ENCODE measurements at regions of chr14 and their contacts with region 1.

Region 1: DNA sequence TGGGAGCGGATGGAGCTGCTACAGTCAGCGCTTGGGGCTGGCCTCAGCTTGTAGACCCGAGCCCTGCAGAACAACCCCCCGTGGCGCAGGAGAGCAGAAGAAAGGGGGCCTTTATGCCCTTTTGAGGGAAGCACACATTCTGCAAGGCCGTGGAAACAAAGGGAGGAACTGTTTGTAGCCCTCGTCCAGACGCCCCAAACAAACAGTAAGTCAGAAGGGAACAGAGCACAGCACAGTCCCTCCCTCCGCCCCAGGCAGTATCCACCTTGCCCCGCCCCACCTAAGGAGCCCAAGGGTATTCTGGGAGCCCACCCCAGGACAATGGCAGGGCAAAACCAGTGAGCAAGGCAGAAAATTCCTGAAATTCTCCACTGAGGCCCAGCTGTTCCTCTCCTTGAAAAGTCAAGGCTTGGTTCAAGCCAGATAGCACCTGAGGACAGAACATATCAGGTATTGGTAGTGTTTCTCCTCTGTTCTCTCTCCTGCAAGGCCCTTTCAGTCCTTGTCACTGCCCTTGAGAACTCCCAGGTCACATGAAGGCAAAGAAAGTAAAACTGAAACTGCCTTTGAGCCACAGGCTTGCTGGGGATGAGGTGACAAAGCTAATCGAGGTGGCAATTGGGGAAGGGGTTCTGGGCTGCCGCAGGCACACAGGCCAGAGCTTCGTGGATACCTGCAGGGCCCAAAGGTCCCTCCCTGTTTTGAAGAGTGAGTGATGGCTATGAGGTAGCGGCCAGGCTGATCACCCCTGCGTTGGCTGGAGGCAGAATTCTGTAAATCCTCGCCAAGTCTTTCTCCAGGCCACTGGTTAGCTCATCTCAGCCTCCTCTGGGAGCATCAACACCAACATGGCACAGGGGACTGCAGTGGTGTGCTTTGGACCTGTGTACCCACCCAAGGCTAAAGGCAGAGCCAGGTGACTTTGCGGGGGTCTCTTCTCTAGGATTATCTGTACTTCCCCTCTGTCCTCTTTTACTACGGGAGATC is 499 bp downstream of the DGLUCY start:
- DNase-seq: peak; percentile 83
- H3K4me3 Mint-ChIP-seq: peak overlapping the region; percentile 94
- H3K27ac Mint-ChIP-seq: peak overlapping the region; percentile 96
- H3K4me1 Mint-ChIP-seq: peaks cover 65% of the 10 kb centered on the region
- H3K27me3 Mint-ChIP-seq: no peaks in the 10 kb centered on the region

Region 2: DNA sequence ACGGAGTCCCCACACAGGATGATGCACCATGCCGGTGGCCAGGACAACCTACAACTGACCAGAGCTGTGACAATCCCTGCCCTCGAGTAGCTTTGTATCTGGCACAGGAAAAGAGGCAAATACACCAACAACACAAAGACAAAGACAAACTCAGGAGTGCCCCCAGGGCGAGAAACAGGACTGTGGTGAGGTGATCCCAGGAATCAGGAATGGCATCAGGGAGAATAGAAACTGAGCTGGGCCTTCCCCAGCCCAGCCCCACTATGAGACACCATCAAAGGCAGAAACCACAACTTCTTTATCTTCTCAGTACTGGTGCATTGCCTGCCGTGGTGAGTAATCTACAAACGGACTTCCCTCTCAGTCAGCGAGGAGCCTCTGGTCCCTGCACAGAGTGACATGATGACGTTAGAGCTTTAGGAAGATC is 455.8 kb before region 1 on chr14:
- CTCF ChIA-PET with region 1: no interaction called
- POLR2A ChIA-PET with region 1: no interaction called
- DNase-seq: no peak
- H3K4me3 Mint-ChIP-seq: no peak overlapping the region
- H3K27ac Mint-ChIP-seq: no peak overlapping the region
- H3K4me1 Mint-ChIP-seq: peaks cover 9% of the 10 kb centered on the region
- H3K27me3 Mint-ChIP-seq: no peaks in the 10 kb centered on the region

Region 3: DNA sequence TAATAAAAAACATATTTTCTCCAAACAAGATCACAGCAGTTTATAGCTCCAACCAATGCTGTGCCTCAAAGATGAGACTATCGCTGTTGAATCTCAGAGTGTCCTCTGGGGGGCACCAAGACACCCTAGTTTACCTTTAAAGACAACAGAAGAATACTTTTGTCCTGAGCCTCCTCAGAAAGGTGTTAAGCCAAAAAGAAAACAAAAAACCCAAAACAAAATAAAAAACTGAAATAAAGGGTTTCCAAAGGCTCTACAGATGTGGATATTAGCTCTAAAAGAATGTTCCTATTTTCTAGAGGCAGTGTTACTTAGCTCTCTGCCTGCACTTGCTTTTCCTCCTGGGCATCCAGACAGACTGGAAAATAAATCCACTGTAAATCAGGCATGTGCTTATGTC is 211.3 kb before region 1 on chr14:
- CTCF ChIA-PET with region 1: interaction called, 37 read pairs
- POLR2A ChIA-PET with region 1: interaction called, 9 read pairs
- DNase-seq: peak; percentile 66
- H3K4me3 Mint-ChIP-seq: no peak overlapping the region
- H3K27ac Mint-ChIP-seq: peak overlapping the region; percentile 21
- H3K4me1 Mint-ChIP-seq: peaks cover 30% of the 10 kb centered on the region
- H3K27me3 Mint-ChIP-seq: no peaks in the 10 kb centered on the region

Region 4: DNA sequence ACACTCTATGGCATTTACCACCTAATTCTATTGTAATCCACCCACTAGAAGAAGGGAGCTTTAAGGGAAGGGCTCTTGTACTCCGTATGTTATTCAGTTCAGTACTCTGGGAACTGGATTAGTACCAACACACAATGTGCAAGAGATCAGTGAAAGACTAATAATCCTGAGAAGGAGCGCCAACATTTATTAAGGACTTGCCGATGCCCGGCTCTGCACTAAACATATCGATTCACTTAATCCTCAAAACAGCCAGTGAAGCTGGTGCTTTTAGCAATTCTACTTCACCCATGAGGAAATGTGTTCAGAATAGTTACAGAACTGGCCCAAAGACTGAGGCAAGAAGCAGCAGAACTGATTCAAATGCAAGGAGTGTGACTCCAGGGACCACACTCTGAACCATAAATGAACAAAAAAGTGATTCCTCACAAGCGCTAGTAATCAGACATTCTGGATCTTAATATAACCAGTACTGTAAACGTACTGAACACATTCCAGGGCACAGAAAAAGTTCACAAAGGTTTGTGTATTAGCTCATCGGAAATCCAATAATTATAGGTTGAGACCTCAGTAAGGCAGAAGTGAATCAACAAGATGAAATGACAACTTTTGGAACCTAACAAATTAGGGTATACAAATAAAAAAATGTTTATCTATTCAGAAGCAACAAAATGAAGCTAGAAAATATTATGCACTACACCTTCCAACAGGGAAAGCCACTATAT is 134.7 kb before region 1 on chr14:
- CTCF ChIA-PET with region 1: no interaction called
- POLR2A ChIA-PET with region 1: no interaction called
- DNase-seq: no peak
- H3K4me3 Mint-ChIP-seq: no peak overlapping the region
- H3K27ac Mint-ChIP-seq: no peak overlapping the region
- H3K4me1 Mint-ChIP-seq: peaks cover 1% of the 10 kb centered on the region
- H3K27me3 Mint-ChIP-seq: no peaks in the 10 kb centered on the region

Region 5: GRCh38 chr14:91038438-91038837 is 75.9 kb before region 1 on chr14:
- CTCF ChIA-PET with region 1: interaction called, 4 read pairs
- POLR2A ChIA-PET with region 1: interaction called, 33 read pairs
- DNase-seq: no peak
- H3K4me3 Mint-ChIP-seq: no peak overlapping the region
- H3K27ac Mint-ChIP-seq: no peak overlapping the region
- H3K4me1 Mint-ChIP-seq: peaks cover 70% of the 10 kb centered on the region
- H3K27me3 Mint-ChIP-seq: no peaks in the 10 kb centered on the region

Region 6: GRCh38 chr14:91071773-91072172 is 42.6 kb before region 1 on chr14:
- CTCF ChIA-PET with region 1: interaction called, 8 read pairs
- POLR2A ChIA-PET with region 1: interaction called, 488 read pairs
- DNase-seq: no peak
- H3K4me3 Mint-ChIP-seq: no peak overlapping the region
- H3K27ac Mint-ChIP-seq: no peak overlapping the region
- H3K4me1 Mint-ChIP-seq: peaks cover 56% of the 10 kb centered on the region
- H3K27me3 Mint-ChIP-seq: no peaks in the 10 kb centered on the region

Region 7: DNA sequence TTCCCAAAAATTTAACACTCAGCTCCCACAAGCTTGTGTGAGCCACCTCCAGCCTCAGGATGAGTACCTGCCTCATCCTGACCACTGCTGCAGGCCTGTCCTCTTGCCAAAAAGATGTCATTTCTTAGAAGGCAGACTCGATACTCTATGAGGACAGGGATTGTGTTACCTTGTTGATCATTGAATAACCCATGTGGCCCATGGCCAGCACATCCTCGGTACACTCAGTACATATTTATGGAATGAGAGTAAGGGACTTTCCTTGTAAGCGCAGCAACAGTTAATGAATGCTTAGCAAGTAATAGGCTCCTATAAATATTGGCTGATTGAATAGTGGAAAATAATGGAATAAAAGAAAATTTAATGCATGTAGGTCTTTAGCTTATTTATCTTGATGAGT is 15.8 kb before region 1 on chr14:
- CTCF ChIA-PET with region 1: interaction called, 5 read pairs
- POLR2A ChIA-PET with region 1: interaction called, 46 read pairs
- DNase-seq: no peak
- H3K4me3 Mint-ChIP-seq: no peak overlapping the region
- H3K27ac Mint-ChIP-seq: no peak overlapping the region
- H3K4me1 Mint-ChIP-seq: peaks cover 30% of the 10 kb centered on the region
- H3K27me3 Mint-ChIP-seq: no peaks in the 10 kb centered on the region

Region 8: DNA sequence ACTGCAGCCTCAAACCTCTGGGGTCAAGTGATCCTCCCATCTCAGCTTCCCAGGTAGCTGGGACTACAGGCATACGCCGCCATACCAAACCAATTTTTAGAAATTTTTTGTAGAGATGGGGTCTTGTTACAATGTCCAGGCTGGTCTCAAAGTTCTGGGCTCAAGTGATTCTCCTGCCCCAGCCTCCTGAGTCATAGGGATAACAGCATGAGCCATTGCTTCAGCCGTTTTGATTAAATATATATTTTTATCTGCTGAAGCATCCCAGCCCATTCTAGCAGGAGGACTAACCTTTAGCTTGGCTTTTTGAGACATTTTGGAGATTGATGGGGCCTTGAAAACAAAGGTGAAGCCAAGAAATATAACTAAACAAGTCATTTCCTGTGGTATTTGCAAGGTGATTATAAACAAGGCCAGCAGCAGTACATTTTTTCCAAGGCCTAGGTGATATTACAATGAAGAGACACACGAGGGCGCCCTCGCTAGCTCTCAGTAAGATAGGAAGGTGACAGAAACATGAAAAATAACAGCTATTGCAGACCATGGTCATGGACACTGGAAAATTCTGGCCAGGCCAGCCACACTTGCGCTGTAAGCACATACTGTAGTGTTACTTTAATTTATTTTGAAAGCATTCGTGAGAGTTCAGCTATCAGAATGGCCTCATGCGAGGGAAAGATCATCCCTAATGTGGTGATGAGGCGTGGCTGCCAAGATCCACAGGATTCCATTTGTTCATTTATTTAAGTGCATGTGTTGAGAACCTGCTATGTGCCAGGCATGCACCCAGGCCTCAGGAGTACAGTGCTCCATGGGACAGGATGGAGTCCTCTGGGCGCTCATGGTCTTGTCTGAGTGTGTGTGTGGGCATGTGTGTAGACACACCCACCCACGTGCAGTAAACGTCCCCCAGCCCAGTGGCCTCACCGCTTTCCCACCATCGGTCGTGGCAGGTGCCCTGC is 63.0 kb after region 1 on chr14:
- CTCF ChIA-PET with region 1: interaction called, 35 read pairs
- POLR2A ChIA-PET with region 1: interaction called, 16 read pairs
- DNase-seq: peak; percentile 79
- H3K4me3 Mint-ChIP-seq: no peak overlapping the region
- H3K27ac Mint-ChIP-seq: peak overlapping the region; percentile 77
- H3K4me1 Mint-ChIP-seq: peaks cover 25% of the 10 kb centered on the region
- H3K27me3 Mint-ChIP-seq: no peaks in the 10 kb centered on the region

Region 9: GRCh38 chr14:91396959-91397815 is 282.8 kb after region 1 on chr14:
- CTCF ChIA-PET with region 1: no interaction called
- POLR2A ChIA-PET with region 1: no interaction called
- DNase-seq: peak; percentile 81
- H3K4me3 Mint-ChIP-seq: peak overlapping the region; percentile 68
- H3K27ac Mint-ChIP-seq: peak overlapping the region; percentile 85
- H3K4me1 Mint-ChIP-seq: peaks cover 95% of the 10 kb centered on the region
- H3K27me3 Mint-ChIP-seq: no peaks in the 10 kb centered on the region